ENCODE measurements at regions of chr3 and their contacts with region 1.

Region 1: DNA sequence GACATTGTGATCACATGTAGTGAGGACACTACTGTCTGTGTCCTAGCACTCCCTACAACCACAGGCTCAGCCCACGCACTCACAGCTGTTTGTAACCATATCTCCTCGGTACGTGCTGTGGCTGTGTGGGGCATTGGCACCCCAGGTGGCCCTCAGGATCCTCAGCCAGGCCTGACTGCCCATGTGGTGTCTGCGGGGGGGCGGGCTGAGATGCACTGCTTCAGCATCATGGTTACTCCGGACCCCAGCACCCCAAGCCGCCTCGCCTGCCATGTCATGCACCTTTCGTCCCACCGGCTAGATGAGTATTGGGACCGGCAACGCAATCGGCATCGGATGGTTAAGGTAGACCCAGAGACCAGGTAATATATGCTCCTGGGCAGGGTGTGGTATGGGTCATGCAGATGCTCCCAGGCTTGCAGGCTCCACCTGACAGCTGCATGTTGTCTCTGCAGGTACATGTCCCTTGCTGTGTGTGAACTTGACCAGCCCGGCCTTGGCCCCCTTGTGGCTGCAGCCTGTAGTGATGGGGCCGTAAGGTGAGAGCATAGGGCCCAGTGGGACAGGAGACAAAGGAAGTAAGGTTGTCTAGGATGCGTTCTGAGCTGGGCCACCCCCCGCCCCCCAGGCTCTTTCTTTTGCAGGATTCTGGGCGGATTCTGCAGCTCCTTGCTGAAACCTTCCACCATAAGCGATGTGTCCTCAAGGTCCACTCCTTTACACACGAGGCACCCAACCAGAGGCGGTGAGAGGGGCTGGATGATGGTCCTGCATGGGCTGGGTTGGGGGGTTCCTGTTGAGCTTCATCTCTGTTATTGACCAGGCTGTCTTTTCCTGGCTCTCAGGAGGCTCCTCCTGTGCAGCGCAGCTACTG is 4.4 kb downstream of the DALRD3 start:
- DNase-seq: peak; percentile 72
- H3K4me3 ChIP-seq: no peak overlapping the region
- H3K27ac ChIP-seq: no peak overlapping the region
- H3K4me1 ChIP-seq: peaks cover 0 to 19% of the 10 kb centered on the region in 2 experiments; a peak in 1 of 4 replicates
- H3K27me3 ChIP-seq: no peaks in the 10 kb centered on the region
- CTCF ChIP-seq: peak; percentile 69
- EP300 ChIP-seq: no peak
- RAD21 ChIP-seq: peak; percentile 45

Region 2: GRCh38 chr3:48367201-48367600 is 646.8 kb before region 1 on chr3:
- CTCF ChIA-PET with region 1: no interaction called
- POLR2A ChIA-PET with region 1: no interaction called
- DNase-seq: peak; percentile 69
- H3K4me3 ChIP-seq: no peak overlapping the region
- H3K27ac ChIP-seq: peak overlapping the region in 1 of 2 experiments; percentile 74; a peak in 2 of 4 replicates
- H3K4me1 ChIP-seq: peaks cover 0 to 15% of the 10 kb centered on the region in 2 experiments; a peak in 1 of 4 replicates
- H3K27me3 ChIP-seq: no peaks in the 10 kb centered on the region
- CTCF ChIP-seq: no peak
- EP300 ChIP-seq: peak in 1 of 2 experiments; percentile 15; a peak in 1 of 4 replicates
- RAD21 ChIP-seq: no peak; the same call in 1 of the 2 replicates

Region 3: DNA sequence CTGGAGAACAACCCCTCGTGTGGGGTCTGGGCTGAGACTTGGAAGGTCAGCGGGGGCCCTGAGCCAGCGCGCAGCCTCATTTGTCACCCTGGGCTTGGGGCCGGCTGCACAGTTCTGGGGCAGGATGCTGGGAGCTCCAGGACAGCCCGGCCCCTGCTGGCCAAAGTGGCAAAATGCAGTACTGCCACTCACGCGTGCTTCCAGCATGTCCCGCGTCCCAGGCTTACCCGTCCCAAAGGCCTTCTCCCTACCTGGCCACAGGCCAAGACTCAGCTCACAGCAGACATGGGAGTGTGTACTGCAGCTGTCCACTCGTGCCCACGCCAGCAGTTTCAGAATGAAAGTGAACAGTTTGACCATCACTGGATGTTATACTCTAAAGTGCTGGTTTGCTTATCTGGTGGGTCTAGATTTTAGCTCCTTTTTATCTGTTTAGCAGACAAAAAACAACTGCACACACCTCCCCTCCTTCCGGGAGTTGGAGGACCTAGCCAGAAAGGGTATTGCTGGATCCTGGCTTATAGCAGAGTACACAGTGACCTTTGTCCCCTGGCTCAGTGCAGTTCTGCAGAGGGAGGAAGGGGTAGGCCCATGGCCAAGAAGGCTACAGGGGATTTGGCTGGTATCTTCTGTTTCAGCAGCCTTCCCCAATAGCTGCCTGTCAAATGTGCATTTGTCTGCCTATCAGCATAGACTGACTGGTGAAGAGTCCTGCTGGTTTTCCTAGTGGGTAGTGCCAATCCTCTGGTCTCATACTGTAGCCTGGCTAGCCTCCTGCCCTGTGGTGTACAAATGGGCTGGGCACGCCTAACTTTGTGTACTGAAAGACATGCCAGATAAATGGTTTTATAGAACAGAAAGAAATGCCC is 273.8 kb before region 1 on chr3:
- CTCF ChIA-PET with region 1: no interaction called
- POLR2A ChIA-PET with region 1: no interaction called
- DNase-seq: peak; percentile 93
- H3K4me3 ChIP-seq: no peak overlapping the region
- H3K27ac ChIP-seq: peak overlapping the region in 1 of 2 experiments; percentile 48; a peak in 1 of 4 replicates
- H3K4me1 ChIP-seq: peaks cover 0 to 17% of the 10 kb centered on the region in 2 experiments; a peak in 1 of 4 replicates
- H3K27me3 ChIP-seq: no peaks in the 10 kb centered on the region
- CTCF ChIP-seq: peak; percentile 72
- EP300 ChIP-seq: no peak
- RAD21 ChIP-seq: peak; percentile 67

Region 4: DNA sequence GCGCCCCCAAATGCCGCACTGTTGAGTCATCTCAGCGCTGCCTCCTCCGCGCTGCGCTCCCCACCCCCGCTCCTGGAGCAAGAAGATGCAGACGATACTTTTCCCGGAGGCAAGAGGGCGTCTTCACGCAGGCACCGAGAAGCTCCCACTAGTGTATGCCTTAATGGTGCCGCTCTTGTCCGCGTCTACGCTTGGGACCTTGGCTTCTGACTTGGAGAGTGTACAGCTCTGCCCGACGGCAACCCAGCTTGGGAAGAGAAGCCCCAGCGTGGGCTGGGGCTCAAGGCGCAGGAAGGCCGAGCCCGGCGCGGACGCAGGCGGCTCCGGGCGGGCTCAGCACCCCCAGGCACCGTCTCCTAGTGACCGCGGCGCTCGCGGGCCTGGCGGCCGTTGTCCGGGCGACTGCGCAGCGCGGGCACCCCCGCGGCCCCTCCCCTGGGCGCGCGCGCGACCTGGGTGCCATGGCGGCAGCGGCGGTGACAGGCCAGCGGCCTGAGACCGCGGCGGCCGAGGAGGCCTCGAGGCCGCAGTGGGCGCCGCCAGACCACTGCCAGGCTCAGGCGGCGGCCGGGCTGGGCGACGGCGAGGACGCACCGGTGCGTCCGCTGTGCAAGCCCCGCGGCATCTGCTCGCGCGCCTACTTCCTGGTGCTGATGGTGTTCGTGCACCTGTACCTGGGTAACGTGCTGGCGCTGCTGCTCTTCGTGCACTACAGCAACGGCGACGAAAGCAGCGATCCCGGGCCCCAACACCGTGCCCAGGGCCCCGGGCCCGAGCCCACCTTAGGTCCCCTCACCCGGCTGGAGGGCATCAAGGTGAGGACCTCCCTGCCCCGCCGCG is 24.0 kb before region 1 on chr3 and contains the start of gene P4HTM:
- CTCF ChIA-PET with region 1: interaction called, 114 read pairs
- POLR2A ChIA-PET with region 1: interaction called, 44 read pairs
- DNase-seq: no peak
- H3K4me3 ChIP-seq: peak within 1 kb of the TSS; percentile 35 to 63; a peak in 3 of 4 replicates
- H3K27ac ChIP-seq: peak within 1 kb of the TSS; percentile 12 to 88; a peak in 3 of 4 replicates
- H3K4me1 ChIP-seq: peaks cover 0 to 2% of the 10 kb centered on the region in 2 experiments; a peak in 1 of 4 replicates
- H3K27me3 ChIP-seq: no peaks in the 10 kb centered on the region
- CTCF ChIP-seq: peak; percentile 34
- EP300 ChIP-seq: peak in 1 of 2 experiments; percentile 26; a peak in 1 of 4 replicates
- RAD21 ChIP-seq: no peak
- polyA plus RNA-seq, gene P4HTM: 21.0 and 21.4 TPM in 2 replicates

Region 5: DNA sequence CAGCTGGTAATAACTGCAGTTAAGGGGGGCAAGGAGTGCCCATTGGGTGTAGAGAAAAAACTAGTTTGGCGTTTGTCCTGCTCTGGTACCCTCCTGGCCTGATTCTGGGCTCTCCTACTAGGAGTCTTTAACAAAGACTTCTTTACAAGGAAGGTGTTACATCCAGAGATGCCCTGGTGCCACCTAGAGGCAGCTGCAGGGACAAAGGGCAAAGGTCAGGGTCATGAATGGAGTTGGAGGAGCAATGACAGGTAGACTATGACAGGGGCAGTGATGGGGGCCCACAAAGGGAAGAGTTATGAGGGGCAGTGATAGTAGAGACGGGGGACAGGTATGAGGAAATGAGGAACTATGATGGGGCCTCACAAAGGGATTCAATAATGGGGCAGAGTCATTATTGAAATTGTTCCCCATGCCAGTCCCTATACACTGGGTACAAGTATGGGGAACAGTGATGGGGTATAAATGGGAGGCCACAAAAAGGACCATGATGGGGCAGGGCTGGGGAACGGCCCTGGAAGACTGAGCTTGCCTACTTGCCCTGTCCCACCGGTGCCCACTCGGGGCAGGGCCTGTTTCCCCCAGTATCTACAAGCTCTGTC is 144.2 kb after region 1 on chr3:
- CTCF ChIA-PET with region 1: no interaction called
- POLR2A ChIA-PET with region 1: no interaction called
- DNase-seq: peak; percentile 54
- H3K4me3 ChIP-seq: no peak overlapping the region
- H3K27ac ChIP-seq: no peak overlapping the region
- H3K4me1 ChIP-seq: no peaks in the 10 kb centered on the region
- H3K27me3 ChIP-seq: no peaks in the 10 kb centered on the region
- CTCF ChIP-seq: peak; percentile 51
- EP300 ChIP-seq: no peak
- RAD21 ChIP-seq: peak; percentile 69

Measured in SK-N-SH (cell line).